ENCODE measurements at regions of chr2 and their contacts with region 1.

Region 1: DNA sequence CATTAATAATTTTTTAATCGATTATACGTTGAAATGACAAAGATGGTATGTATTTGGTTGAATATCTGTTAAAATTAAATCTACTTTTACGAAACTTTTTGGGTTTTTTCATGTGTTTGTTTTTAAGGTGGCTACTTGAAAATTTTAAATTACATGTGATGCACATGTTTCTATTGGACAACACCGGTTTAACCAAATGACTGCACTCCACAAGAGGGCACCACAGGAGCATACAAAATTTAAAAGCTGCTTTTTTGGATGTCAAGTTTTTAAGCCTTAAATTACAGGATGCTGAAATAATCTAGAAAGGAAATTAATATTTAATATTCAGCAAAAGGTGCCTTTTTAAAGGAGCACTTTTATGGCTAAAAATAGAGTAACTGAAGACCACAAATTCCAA is 98.7 kb downstream of the ACVR1 start:
- DNase-seq: peak; percentile 64
- H3K4me3 ChIP-seq: no peak overlapping the region
- H3K27ac ChIP-seq: no peak overlapping the region
- H3K27me3 ChIP-seq: no peaks in the 10 kb centered on the region
- CTCF ChIP-seq: peak; percentile 66

Region 2: DNA sequence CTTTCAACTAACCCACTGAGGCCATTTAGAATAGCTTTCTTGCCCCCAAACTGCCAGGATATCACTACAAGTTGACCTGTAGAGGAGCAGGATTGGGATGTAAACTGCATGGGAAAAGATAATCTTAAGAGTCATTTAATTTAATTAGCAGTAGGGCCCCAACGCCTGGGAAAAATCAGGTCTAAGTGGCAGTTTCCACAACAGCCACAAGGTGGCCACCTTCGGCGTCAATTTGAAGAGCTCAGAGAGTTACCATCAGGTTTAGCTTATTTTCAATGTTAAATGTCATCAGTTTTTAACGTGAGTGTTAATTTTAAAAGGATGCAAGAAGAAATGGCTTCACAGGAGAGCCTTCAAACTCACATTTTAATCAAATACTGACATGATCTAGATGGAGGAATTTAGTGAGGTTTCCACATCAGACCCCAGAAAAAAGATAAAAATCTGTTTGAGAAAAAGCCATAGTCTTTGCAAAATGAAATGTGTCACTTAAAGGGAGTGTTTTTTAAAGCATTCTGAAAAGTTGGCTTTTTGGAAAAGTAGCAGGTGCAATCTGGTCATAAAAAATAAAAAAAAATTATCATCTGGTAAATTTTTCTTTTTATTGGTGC is 247.0 kb after region 1 on chr2:
- in situ Hi-C with region 1: loop called (anchors 25 kb)
- DNase-seq: peak; percentile 33
- H3K4me3 ChIP-seq: no peak overlapping the region
- H3K27ac ChIP-seq: no peak overlapping the region
- H3K27me3 ChIP-seq: no peaks in the 10 kb centered on the region
- CTCF ChIP-seq: peak; percentile 88